ENCODE measurements at regions of chr20 and their contacts with region 1.

Region 1: GRCh38 chr20:39081255-39081654 is 119.1 kb downstream of the DHX35 start:
- DNase-seq: peak; percentile 90
- ATAC-seq: peak; percentile 78
- H3K4me3 Mint-ChIP-seq: no peak overlapping the region
- H3K27ac Mint-ChIP-seq: no peak overlapping the region
- H3K4me1 Mint-ChIP-seq: no peaks in the 10 kb centered on the region
- H3K27me3 Mint-ChIP-seq: peaks cover 11% of the 10 kb centered on the region

Region 2: GRCh38 chr20:39070484-39071231 is 10.6 kb before region 1 on chr20:
- CTCF ChIA-PET with region 1: interaction called, 20 read pairs
- POLR2A ChIA-PET with region 1: no interaction called
- intact Hi-C with region 1: no loop called
- DNase-seq: no peak
- ATAC-seq: peak; percentile 44
- H3K4me3 Mint-ChIP-seq: no peak overlapping the region
- H3K27ac Mint-ChIP-seq: no peak overlapping the region
- H3K4me1 Mint-ChIP-seq: no peaks in the 10 kb centered on the region
- H3K27me3 Mint-ChIP-seq: peaks cover 16% of the 10 kb centered on the region